ENCODE measurements at regions of chr2 and their contacts with region 1.

Region 1: DNA sequence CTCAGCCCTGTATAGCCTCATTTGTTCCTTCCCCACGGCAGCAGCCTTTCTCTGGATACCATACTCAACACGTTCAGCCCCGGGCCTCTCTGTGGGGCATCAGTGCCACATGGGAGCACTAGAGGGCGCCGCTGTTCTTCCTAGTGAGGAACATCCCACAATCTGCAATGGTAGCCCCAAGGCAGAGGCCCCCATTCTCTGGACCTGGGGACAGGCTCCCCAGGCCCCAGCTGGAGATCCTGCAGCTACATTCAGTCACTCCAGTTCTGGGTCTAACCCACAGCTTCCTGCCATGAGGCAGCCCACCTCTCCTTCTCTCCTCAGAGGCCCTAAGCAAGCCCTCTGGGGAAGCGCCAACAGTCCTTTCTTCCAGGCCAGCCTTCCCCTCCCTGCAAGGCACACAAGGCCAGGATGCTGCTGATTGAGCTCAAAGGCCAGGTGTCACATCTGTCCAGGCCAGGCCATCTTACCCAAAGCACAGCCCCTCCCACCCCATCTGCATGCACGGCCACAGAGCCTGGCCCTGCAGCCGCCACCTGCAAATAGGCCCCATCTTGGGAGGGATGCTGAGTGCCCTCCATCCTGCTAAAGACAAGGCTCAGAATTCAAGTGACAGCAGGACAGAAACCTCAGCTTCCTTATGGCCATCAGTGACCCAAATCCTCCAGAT is 14.3 kb upstream of the SFXN5 start:
- H3K4me3 ChIP-seq: no peak overlapping the region
- H3K27ac ChIP-seq: no peak overlapping the region
- H3K4me1 ChIP-seq: no peaks in the 10 kb centered on the region; the same call in 1 of the 2 replicates
- CTCF ChIP-seq: peak; percentile 77

Region 2: DNA sequence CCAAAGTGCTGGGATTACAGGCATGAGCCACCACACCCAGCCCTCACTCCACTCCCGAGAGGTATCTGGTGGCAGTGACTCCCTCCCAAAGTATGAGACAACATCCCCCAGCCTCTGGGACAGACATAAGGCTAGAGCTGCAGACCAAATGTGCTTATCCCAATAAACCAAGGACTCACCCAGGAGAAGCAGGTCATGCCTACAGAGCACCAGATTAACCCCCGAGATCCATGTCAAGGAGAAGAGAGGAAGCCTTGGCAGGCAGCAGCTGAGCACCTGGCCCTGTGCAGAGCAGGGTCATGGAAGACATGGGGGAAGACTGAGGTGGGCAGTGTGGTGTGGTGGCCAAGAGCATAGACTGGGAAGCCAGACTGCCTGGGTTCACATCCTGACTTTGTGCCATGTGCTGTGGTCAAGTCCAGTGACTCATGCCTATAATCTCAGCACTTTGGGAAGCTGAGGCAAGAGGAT is 19.7 kb after region 1 on chr2:
- CTCF ChIA-PET with region 1: interaction called, 16 read pairs
- POLR2A ChIA-PET with region 1: no interaction called
- H3K4me3 ChIP-seq: no peak overlapping the region
- H3K27ac ChIP-seq: no peak overlapping the region
- H3K4me1 ChIP-seq: peaks cover 13% of the 10 kb centered on the region
- CTCF ChIP-seq: no peak

Region 3: DNA sequence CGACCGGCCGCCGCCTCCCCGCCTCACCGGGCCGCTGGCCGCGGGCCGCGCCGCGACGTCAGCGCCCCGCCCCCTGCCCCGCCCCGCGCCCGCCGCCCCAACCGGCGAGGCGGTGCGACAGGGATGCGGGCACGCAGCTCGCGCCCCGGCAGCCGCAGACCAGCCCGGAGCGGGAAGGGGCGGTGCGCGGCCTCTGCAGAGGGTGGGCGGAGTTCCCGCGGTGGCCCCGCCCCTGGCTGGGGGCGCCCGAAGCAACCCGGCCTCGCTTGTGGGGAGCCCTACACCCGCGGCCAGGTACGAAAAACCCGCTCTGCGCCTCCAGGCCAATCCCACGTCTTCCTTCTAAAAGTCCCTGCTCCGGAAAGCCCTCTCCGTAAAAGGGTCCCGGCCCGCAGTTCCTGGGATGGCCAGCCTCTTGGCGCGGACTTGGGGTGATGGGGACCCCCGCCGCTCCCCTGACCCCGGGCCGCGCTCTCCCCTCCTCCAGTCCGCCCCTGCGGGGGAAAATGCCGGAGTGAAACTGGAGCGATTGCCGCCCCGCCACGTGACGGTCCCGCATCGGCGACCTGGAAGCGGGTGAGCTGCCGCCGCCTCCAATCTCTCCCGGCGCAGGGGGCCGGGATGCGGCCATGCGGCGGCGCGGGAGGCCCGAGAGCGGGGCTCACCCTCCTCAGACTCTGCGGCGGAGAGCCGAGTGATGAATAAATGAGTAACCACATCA is 27.2 kb after region 1 on chr2 and contains the start of gene RAB11FIP5:
- CTCF ChIA-PET with region 1: interaction called, 16 read pairs
- POLR2A ChIA-PET with region 1: interaction called, 6 read pairs
- H3K4me3 ChIP-seq: peak within 1 kb of the TSS; percentile 64
- H3K27ac ChIP-seq: peak within 1 kb of the TSS; percentile 90
- H3K4me1 ChIP-seq: peaks cover 17% of the 10 kb centered on the region; the same call in 1 of the 2 replicates
- CTCF ChIP-seq: peak; percentile 74

Region 4: GRCh38 chr2:73163483-73164367 is 77.9 kb after region 1 on chr2:
- CTCF ChIA-PET with region 1: interaction called, 146 read pairs
- POLR2A ChIA-PET with region 1: no interaction called
- H3K4me3 ChIP-seq: no peak overlapping the region
- H3K27ac ChIP-seq: no peak overlapping the region
- H3K4me1 ChIP-seq: no peaks in the 10 kb centered on the region
- CTCF ChIP-seq: peak; percentile 62

Region 5: GRCh38 chr2:73176881-73177644 is 91.2 kb after region 1 on chr2:
- CTCF ChIA-PET with region 1: interaction called, 42 read pairs
- POLR2A ChIA-PET with region 1: interaction called, 3 read pairs
- H3K4me3 ChIP-seq: peak overlapping the region; percentile 26
- H3K27ac ChIP-seq: no peak overlapping the region
- H3K4me1 ChIP-seq: peaks cover 3% of the 10 kb centered on the region; the same call in 1 of the 2 replicates
- CTCF ChIP-seq: peak; percentile 100

Region 6: GRCh38 chr2:73212448-73213176 is 126.8 kb after region 1 on chr2:
- CTCF ChIA-PET with region 1: interaction called, 25 read pairs
- POLR2A ChIA-PET with region 1: no interaction called
- H3K4me3 ChIP-seq: no peak overlapping the region
- H3K27ac ChIP-seq: no peak overlapping the region
- H3K4me1 ChIP-seq: no peaks in the 10 kb centered on the region
- CTCF ChIP-seq: peak; percentile 67

Measured in HEK293 (cell line).